Ascending aorta (tissue), 2 donors: ENCODE measurements at regions of chr6 and their contacts with region 1.

Region 1: GRCh38 chr6:121334299-121335086 is at the start of gene TBC1D32:
- DNase-seq: peak; percentile 47 to 96
- H3K4me3 ChIP-seq: peak within 1 kb of the TSS; percentile 74 to 76
- H3K27ac ChIP-seq: peak within 1 kb of the TSS; percentile 94 to 96
- H3K4me1 ChIP-seq: no peaks in the 10 kb centered on the region
- H3K27me3 ChIP-seq: no peaks in the 10 kb centered on the region
- CTCF ChIP-seq: no peak
- total RNA-seq, gene TBC1D32: 2.1 TPM

Region 2: DNA sequence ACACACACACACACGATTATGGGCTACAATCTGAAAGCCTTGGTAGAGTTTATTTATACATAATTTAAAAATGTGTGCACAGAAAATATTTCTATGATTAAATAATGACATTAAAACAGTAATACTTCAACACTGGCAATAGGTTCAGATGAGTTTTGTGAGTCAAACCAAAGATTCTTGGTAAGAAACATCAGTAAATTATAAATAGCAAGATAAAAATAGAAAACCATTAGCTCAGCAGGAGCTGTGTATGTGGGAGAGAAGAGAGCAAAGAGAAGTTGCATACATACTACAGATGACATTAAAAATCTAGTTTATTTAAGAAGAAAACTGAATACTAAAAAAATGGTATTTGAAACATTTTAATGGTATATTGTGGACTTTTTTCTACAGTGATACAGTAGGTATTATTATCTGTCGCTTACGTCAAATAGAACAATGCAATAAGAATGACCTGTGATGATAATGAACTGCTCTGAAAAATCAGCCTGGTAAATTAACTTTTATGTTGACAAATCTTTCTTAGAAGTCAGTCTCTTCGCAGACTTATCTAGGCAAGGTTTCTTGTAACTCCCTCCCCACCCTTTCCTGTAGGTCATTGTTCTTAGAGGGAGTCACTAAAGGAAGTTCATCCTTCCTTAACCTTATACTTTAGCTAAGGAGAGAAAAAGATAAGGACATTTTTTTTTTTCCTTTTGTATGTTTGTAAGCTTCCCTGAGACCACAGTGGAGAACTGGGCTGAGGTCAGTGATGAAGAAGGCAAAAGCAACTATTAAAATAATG is 250.3 kb after region 1 on chr6:
- intact Hi-C with region 1: loop called (anchors 10 kb)
- DNase-seq: no peak
- H3K4me3 ChIP-seq: no peak overlapping the region
- H3K27ac ChIP-seq: peak overlapping the region; percentile 57 to 69
- H3K4me1 ChIP-seq: peaks cover 0 to 15% of the 10 kb centered on the region in 2 donors
- H3K27me3 ChIP-seq: no peaks in the 10 kb centered on the region
- CTCF ChIP-seq: no peak

Region 3: GRCh38 chr6:122184401-122184827 is 849.9 kb after region 1 on chr6:
- intact Hi-C with region 1: loop called (anchors 10 kb)
- DNase-seq: no peak
- H3K4me3 ChIP-seq: peak overlapping the region; percentile 39 to 50
- H3K27ac ChIP-seq: no peak overlapping the region
- H3K4me1 ChIP-seq: no peaks in the 10 kb centered on the region
- H3K27me3 ChIP-seq: no peaks in the 10 kb centered on the region
- CTCF ChIP-seq: peak; percentile 27 to 55 (median 36)

Region 4: DNA sequence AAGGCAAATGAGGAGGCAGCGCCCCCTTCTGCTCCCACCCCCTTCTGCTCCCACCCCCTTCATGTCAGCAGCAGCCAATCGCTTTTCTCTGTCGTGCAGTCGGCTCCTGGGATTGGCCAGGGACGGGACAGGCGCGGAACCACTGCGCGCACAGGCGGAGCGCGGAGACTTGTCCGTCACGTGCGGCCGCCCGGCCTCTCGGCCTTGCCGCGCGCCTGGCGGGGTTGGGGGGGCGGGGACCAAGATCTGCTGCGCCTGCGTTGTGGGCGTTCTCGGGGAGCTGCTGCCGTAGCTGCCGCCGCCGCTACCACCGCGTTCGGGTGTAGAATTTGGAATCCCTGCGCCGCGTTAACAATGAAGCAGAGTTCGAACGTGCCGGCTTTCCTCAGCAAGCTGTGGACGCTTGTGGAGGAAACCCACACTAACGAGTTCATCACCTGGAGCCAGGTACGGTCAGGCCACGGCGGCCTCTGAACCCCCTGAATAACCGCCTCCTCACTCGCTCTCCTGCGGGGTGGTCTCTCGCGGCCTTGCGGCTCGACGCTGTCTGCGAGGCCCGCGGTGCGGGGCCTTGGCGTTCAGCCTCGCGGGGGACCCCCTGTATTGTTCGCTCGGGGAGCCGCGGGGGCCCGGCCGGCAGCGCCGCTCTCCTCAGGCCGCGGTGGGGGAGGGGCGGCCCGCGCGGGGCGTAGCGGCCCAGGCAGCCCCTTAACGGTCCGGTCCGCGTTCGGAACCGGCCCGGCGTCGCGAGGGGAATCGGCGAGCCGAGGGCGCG is 1065.1 kb after region 1 on chr6 and contains the start of gene HSF2:
- intact Hi-C with region 1: loop called (anchors 10 kb)
- DNase-seq: peak; percentile 92 to 98
- H3K4me3 ChIP-seq: peak within 1 kb of the TSS; percentile 84 to 99
- H3K27ac ChIP-seq: peak within 1 kb of the TSS; percentile 77
- H3K4me1 ChIP-seq: peaks cover 0 to 2% of the 10 kb centered on the region in 2 donors
- H3K27me3 ChIP-seq: no peaks in the 10 kb centered on the region
- CTCF ChIP-seq: peak in 2 of 3 experiments; percentile 29 to 41
- total RNA-seq, gene HSF2: 26.1 TPM

Region 5: GRCh38 chr6:122471107-122472021 is 1136.9 kb after region 1 on chr6 and contains the start of gene SERINC1:
- intact Hi-C with region 1: loop called (anchors 10 kb)
- DNase-seq: peak; percentile 85 to 97
- H3K4me3 ChIP-seq: peak within 1 kb of the TSS; percentile 69 to 91
- H3K27ac ChIP-seq: peak within 1 kb of the TSS; percentile 89 to 99
- H3K4me1 ChIP-seq: peaks cover 0 to 9% of the 10 kb centered on the region in 2 donors
- H3K27me3 ChIP-seq: no peaks in the 10 kb centered on the region
- CTCF ChIP-seq: no peak
- total RNA-seq, gene SERINC1: 72.6 TPM